ENCODE measurements at regions of chr10 and their contacts with region 1.

Region 1: DNA sequence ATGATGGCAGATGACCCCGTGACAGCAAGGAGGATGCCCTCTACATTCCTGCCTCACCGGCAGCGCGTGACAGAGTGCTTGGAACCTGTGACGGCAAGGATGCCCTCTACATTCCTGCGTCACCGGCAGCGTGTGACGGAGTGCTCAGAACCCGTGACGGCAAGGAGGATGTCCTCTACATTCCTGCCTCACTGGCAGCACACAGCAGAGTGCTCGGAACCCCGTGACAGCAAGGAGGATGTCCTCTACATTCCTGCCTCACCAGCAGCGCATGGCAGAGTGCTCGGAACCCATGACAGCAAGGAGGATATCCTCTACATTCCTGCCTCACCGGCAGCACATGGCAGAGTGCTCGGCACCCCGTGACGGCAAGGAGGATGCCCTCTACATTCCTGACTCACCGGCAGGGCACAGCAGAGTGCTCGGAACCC is 231.0 kb downstream of the DIP2C start:
- DNase-seq: peak; percentile 89
- H3K4me3 ChIP-seq: no peak overlapping the region
- H3K27ac ChIP-seq: peak overlapping the region; percentile 72 to 83 (median 76)
- H3K4me1 ChIP-seq: peaks cover 0 to 52% (median 43%) of the 10 kb centered on the region in 4 donors
- H3K27me3 ChIP-seq: no peaks in the 10 kb centered on the region
- CTCF ChIP-seq: no peak
- EP300 ChIP-seq: peak; percentile 14 to 98 (median 98)
- POLR2A ChIP-seq: no peak

Region 2: GRCh38 chr10:397321-398075 is 60.9 kb before region 1 on chr10:
- intact Hi-C with region 1: no loop called
- DNase-seq: no peak
- H3K4me3 ChIP-seq: no peak overlapping the region
- H3K27ac ChIP-seq: peak overlapping the region in 2 of 4 donors; percentile 64 to 66
- H3K4me1 ChIP-seq: peaks cover 0 to 32% (median 25%) of the 10 kb centered on the region in 4 donors
- H3K27me3 ChIP-seq: no peaks in the 10 kb centered on the region
- CTCF ChIP-seq: no peak
- EP300 ChIP-seq: no peak
- POLR2A ChIP-seq: no peak

Region 3: GRCh38 chr10:475686-476454 is 17.4 kb after region 1 on chr10:
- intact Hi-C with region 1: loop called (anchors 2 kb)
- DNase-seq: no peak
- H3K4me3 ChIP-seq: no peak overlapping the region
- H3K27ac ChIP-seq: peak overlapping the region in 3 of 4 donors; percentile 9 to 57 (median 23)
- H3K4me1 ChIP-seq: peaks cover 0 to 22% (median 5%) of the 10 kb centered on the region in 4 donors
- H3K27me3 ChIP-seq: no peaks in the 10 kb centered on the region
- CTCF ChIP-seq: no peak
- EP300 ChIP-seq: no peak
- POLR2A ChIP-seq: no peak

Region 4: GRCh38 chr10:541750-542371 is 83.4 kb after region 1 on chr10:
- intact Hi-C with region 1: no loop called
- DNase-seq: peak; percentile 62
- H3K4me3 ChIP-seq: no peak overlapping the region
- H3K27ac ChIP-seq: no peak overlapping the region
- H3K4me1 ChIP-seq: peaks cover 0 to 38% (median 33%) of the 10 kb centered on the region in 4 donors
- H3K27me3 ChIP-seq: no peaks in the 10 kb centered on the region
- CTCF ChIP-seq: no peak
- EP300 ChIP-seq: no peak
- POLR2A ChIP-seq: no peak

Region 5: DNA sequence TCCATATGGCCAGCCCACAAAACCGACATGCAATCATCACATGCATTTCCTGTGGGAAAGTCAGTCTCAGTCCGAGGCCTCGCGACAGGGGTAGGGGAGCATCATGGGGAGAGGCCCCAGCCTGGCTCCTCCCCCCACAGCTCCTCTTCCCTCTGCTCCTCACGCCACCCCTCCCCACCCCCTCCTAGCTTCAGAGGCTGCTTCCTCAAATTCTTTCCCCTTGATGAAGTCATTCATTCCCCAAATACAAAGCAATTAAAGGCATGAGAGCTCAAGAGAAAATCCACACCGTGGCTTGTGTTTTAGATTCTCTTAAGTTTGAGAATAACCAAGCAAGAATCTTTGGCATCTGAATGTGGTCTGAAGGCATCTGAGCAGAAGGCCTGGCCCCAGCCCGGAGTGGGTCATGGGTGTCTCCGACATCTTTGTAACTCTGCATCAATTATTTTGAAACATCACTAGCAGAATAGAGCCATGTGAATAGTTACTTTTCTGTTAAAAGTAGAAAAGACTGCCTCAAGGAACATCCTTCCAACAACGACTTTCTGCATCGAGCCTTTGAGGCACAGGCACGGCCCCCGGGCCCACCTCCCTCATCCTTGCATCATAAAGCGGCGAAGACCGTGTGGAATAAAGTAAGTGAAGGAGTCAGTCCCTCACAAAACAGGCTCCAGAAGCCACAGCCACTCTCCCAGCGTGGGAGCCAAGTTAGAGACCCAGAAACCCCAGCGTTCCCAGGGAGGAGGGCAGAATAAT is 140.2 kb after region 1 on chr10:
- intact Hi-C with region 1: no loop called
- DNase-seq: no peak
- H3K4me3 ChIP-seq: no peak overlapping the region
- H3K27ac ChIP-seq: peak overlapping the region; percentile 12 to 79 (median 72)
- H3K4me1 ChIP-seq: peaks cover 0 to 72% (median 67%) of the 10 kb centered on the region in 4 donors
- H3K27me3 ChIP-seq: no peaks in the 10 kb centered on the region
- CTCF ChIP-seq: no peak
- EP300 ChIP-seq: no peak
- POLR2A ChIP-seq: no peak